ENCODE measurements at regions of chr14 and their contacts with region 1.

Region 1: DNA sequence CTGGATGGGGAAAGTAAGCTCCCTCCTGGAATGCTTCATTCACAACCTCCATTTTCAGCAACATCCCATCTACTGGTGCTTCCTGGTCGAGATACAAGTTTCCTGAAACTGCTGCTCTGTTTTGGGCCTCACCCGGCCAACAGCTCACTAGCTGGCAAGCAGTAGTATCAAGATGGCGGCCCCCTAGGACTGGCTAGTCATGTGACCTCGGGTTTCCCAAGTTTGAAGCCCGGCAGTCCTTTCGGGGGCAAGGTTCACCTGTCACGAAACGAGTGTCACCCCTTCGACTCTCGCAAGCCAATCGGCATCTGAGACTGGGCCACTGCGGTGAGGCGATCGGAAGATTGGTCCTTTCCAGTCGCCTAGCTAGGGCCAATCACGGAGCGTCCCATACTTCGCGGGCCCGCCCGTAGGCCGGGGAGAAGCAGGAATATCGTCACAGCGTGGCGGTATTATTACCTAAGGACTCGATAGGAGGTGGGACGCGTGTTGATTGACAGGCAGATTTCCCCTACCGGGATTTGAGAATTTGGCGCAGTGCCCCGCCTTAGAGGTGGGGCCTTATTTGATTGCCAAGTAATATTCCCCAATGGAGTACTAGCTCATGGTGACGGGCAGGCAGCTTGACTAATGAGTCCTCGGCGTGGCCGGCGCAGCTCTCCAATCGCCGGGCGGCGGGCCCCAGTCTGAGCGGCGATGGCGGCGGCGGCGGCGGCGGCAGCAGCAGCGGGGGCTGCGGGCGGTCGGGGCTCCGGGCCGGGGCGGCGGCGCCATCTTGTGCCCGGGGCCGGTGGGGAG is at the start of gene PABPN1:
- DNase-seq: peak; percentile 100
- H3K4me3 ChIP-seq: peak within 1 kb of the TSS; percentile 90 to 97 (median 95)
- H3K27ac ChIP-seq: peak within 1 kb of the TSS; percentile 77
- H3K4me1 ChIP-seq: peaks cover 16% of the 10 kb centered on the region
- H3K27me3 ChIP-seq: no peaks in the 10 kb centered on the region
- CTCF ChIP-seq: no peak
- POLR2A ChIP-seq: no peak
- total RNA-seq, gene PABPN1: 218 and 231 TPM in 2 replicates

Region 2: DNA sequence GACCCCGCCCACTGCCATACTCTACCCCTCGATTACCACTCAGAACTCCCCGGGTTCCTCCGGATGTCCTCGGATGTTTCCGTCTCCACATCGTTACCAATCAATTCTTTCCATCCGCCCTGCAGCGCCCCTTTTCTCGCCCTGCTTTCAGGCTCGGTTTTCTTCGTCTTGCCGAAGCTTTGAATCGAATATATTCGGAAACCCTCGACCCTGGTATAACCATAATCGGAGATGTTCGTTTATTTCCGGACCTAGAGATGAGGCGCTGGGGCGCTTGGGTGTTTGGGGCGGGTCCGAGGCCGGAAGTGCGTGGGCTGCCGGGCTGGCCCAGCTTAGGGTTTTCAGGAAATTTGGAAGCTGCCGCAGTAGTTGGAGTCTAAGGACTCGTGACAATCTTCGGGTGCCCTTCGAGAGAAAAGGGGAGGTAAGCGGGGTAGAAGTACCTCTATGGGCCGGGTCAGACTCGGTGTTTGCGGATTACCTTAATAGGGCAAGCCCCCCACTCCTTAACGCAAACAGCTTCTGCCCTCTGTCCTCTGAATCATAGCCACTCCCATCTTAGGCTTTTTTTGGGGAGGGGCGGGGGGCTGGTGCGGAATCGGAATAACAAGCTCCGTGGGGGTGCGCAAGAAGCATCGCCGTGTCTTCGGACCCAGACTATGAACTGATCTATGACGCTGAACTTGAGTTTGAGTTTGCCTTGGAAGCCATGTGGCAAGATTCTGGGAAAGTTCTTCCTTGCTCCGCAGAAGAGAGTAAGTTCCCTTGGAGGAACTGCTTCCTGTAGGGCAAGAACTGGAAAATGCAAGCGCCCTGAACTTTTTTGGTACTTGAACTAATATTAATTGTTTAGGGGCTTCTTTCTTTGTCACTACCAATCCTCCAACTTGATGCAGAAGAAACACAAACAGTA is 225.5 kb before region 1 on chr14 and contains the start of gene C14orf119:
- CTCF ChIA-PET with region 1: no interaction called
- POLR2A ChIA-PET with region 1: interaction called, 6 read pairs
- dilution Hi-C with region 1: no loop called
- intact Hi-C with region 1: loop called (anchors 1 kb)
- DNase-seq: peak; percentile 100
- H3K4me3 ChIP-seq: peak within 1 kb of the TSS; percentile 87 to 99 (median 94)
- H3K27ac ChIP-seq: peak within 1 kb of the TSS; percentile 89
- H3K4me1 ChIP-seq: peaks cover 28% of the 10 kb centered on the region
- H3K27me3 ChIP-seq: no peaks in the 10 kb centered on the region
- CTCF ChIP-seq: no peak
- POLR2A ChIP-seq: peak; percentile 66
- total RNA-seq, gene C14orf119: 55.5 and 58.3 TPM in 2 replicates

Region 3: DNA sequence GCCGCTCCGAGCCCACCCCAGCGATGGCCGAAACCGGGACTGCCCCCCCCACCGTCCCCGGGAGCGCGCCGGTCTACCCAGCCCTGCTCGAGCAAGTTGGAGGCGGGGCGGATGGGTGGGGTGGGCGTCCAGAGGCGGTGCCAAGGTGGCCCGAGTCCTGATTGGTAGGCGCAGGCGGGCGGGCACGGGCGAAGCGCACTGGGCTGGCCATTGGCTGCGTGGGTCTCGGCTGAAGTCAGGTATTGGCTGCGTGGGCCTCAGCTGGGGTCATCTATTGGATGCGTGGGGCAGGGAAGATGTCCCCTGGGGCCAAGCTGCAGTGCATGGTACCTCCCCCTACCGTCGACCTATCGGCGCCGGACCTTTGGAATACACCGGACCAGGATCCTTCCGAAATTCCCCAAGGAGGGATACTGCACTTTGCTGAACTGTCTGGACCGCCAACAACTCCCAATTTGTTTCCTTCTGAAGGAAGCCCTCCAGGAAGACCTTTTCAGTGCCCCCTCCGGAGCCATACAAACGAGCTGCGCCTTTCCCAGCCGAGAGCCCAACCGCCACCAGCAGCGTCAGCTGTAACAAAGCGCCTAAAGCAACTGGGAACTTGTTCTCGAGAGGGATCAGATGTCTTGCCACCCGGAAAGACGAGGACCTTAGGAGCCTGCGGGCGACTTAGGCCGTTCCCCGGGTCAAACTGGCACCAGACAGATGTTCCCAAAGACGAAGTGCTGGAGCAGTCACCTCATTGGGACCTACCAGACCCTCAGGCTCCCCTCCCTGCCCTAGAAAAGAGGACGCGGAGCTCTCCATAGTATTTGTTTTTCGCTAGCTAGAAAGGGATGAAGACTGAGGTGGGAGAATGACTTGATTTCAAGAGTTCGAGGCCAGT is 34.7 kb before region 1 on chr14 and contains the start of gene HOMEZ:
- CTCF ChIA-PET with region 1: interaction called, 3 read pairs
- POLR2A ChIA-PET with region 1: no interaction called
- dilution Hi-C with region 1: no loop called
- intact Hi-C with region 1: loop called (anchors 2 kb)
- DNase-seq: peak; percentile 99
- H3K4me3 ChIP-seq: peak within 1 kb of the TSS; percentile 79 to 98 (median 94)
- H3K27ac ChIP-seq: peak within 1 kb of the TSS; percentile 65
- H3K4me1 ChIP-seq: peaks cover 21% of the 10 kb centered on the region
- H3K27me3 ChIP-seq: peaks cover 2 to 12% of the 10 kb centered on the region in 2 experiments
- CTCF ChIP-seq: no peak
- POLR2A ChIP-seq: peak; percentile 84
- total RNA-seq, gene HOMEZ: 11.3 and 11.7 TPM in 2 replicates

Region 4: DNA sequence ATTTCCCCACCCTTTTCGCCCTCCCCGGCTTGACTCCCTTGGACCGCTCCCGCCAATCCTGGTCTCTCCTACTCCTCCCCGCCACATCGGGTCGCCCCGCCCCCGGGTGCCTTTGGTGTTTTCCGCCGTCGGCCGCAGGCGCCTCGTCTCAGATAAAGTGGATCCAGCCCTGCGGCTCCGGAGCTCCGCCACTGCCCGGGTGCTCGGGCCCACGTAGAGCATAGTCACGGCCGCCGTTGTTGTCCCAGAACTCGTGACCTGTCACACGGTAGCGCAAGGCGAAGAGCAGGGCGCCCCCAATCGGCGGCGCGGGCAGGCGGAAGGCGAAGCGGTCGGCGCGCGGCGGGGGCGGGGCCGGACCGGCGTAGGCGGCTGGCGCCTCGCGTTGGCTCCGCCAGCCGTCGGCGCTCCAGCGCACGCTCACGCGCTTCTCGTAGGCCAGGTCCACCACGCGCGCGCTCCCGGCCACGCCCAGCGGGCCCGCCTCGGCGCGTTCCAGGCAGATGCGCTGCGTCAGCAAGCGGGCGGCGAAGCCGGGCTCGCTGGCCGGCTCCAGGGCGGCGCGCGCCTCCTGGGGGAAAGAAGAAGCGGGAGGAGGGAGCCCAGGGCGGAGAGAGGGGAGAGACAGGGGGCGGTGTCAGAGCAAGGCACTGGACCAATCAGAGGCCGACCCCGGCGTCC is 19.5 kb before region 1 on chr14:
- CTCF ChIA-PET with region 1: interaction called, 20 read pairs
- POLR2A ChIA-PET with region 1: interaction called, 13 read pairs
- dilution Hi-C with region 1: no loop called
- intact Hi-C with region 1: loop called (anchors 1 kb)
- DNase-seq: peak; percentile 99
- H3K4me3 ChIP-seq: peak overlapping the region; percentile 30 to 79 (median 76)
- H3K27ac ChIP-seq: peak overlapping the region; percentile 75
- H3K4me1 ChIP-seq: peaks cover 18% of the 10 kb centered on the region
- H3K27me3 ChIP-seq: no peaks in the 10 kb centered on the region
- CTCF ChIP-seq: peak; percentile 79 to 91
- POLR2A ChIP-seq: no peak

Region 5: GRCh38 chr14:23306410-23307145 is 14.4 kb before region 1 on chr14 and contains the start of gene BCL2L2:
- CTCF ChIA-PET with region 1: interaction called, 20 read pairs
- POLR2A ChIA-PET with region 1: interaction called, 13 read pairs
- dilution Hi-C with region 1: no loop called
- intact Hi-C with region 1: loop called (anchors 1 kb)
- DNase-seq: peak; percentile 92
- H3K4me3 ChIP-seq: peak within 1 kb of the TSS; percentile 84 to 92 (median 89)
- H3K27ac ChIP-seq: peak within 1 kb of the TSS; percentile 78
- H3K4me1 ChIP-seq: peaks cover 27% of the 10 kb centered on the region
- H3K27me3 ChIP-seq: no peaks in the 10 kb centered on the region
- CTCF ChIP-seq: no peak
- POLR2A ChIP-seq: peak; percentile 75
- total RNA-seq, gene BCL2L2: 24.3 and 26.2 TPM in 2 replicates

Region 6: DNA sequence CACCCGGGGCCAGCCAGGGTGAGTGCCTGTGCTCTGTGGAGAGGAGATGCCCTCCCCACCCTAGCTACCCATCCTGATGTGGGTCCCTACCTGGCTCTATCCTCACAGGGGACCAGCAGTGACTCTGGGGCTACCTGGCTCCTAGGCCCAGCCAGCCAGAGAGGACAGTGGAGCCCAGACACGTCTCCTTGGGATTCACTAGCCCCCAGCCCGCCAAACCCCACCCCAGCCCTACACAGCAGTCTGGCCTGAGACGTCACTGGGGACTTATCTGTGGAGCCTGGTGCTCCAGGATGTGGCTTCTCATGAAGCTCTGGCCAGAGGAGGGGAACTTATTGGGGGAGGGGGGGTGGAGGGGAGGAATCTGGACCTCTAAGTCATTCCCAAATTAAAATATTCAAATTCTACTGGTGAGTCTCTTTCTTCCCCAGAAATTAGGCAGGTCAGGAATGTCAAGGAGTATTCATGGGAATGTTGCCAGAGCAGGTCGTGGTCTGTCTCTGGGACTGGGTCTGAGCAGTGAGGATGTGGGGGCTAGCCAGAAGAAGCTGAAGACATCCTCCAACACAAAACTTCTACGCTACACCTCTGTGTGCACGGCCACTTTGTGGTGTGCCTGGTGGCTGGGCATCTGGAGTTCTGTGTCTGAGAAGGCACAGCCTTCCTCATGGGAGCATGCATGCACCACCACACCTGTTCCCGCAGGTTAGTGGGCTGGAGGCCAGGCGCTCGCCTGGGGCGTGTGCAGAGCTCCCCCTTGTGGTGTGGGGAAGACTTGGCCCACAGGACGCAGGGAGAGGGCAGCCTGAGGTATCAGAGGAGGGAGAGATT is 58.6 kb after region 1 on chr14:
- CTCF ChIA-PET with region 1: interaction called, 48 read pairs
- POLR2A ChIA-PET with region 1: no interaction called
- dilution Hi-C with region 1: no loop called
- intact Hi-C with region 1: no loop called
- DNase-seq: peak; percentile 34
- H3K4me3 ChIP-seq: no peak overlapping the region
- H3K27ac ChIP-seq: no peak overlapping the region
- H3K4me1 ChIP-seq: no peaks in the 10 kb centered on the region
- H3K27me3 ChIP-seq: no peaks in the 10 kb centered on the region
- CTCF ChIP-seq: peak; percentile 80 to 92
- POLR2A ChIP-seq: no peak

Region 7: GRCh38 chr14:23469127-23469905 is 148.3 kb after region 1 on chr14 and contains the start of gene NGDN:
- CTCF ChIA-PET with region 1: no interaction called
- POLR2A ChIA-PET with region 1: no interaction called
- dilution Hi-C with region 1: no loop called
- intact Hi-C with region 1: loop called (anchors 1 kb)
- DNase-seq: peak; percentile 100
- H3K4me3 ChIP-seq: peak within 1 kb of the TSS; percentile 73 to 91 (median 83)
- H3K27ac ChIP-seq: peak within 1 kb of the TSS; percentile 78
- H3K4me1 ChIP-seq: peaks cover 5% of the 10 kb centered on the region
- H3K27me3 ChIP-seq: no peaks in the 10 kb centered on the region
- CTCF ChIP-seq: peak; percentile 79 to 83
- POLR2A ChIP-seq: peak; percentile 52
- total RNA-seq, gene NGDN: 36.3 and 36.5 TPM in 2 replicates

Measured in endothelial cell of umbilical vein (primary cell).